ENCODE measurements at regions of chr2 and their contacts with region 1.

Region 1: GRCh38 chr2:65471409-65471808 is 39.0 kb upstream of the SPRED2 start:
- DNase-seq: no peak
- H3K4me3 ChIP-seq: no peak overlapping the region
- H3K27ac ChIP-seq: no peak overlapping the region
- H3K4me1 ChIP-seq: no peaks in the 10 kb centered on the region
- H3K27me3 ChIP-seq: no peaks in the 10 kb centered on the region
- CTCF ChIP-seq: no peak
- POLR2A ChIP-seq: no peak

Region 2: DNA sequence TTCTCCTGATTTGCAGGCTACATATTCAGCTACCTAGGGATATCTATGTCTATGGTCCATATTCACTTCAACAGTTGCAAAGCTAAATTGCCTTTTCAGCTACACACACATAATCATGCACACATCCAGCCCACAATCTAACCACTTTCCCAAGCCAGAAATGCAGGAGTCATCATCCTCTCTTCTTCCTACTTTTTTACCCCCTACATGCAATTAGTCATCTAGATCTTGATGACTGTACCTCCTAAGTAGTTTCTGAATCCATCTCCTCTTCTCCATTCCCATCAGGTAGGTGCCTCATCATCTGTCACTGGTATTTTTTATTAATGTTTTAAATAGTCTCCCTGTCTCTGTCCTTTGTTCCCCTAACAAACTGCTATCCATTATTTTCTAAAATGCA is 15.3 kb before region 1 on chr2:
- intact Hi-C with region 1: no loop called
- DNase-seq: no peak
- H3K4me3 ChIP-seq: no peak overlapping the region
- H3K27ac ChIP-seq: no peak overlapping the region
- H3K4me1 ChIP-seq: no peaks in the 10 kb centered on the region
- H3K27me3 ChIP-seq: no peaks in the 10 kb centered on the region
- CTCF ChIP-seq: no peak
- POLR2A ChIP-seq: no peak

Region 3: DNA sequence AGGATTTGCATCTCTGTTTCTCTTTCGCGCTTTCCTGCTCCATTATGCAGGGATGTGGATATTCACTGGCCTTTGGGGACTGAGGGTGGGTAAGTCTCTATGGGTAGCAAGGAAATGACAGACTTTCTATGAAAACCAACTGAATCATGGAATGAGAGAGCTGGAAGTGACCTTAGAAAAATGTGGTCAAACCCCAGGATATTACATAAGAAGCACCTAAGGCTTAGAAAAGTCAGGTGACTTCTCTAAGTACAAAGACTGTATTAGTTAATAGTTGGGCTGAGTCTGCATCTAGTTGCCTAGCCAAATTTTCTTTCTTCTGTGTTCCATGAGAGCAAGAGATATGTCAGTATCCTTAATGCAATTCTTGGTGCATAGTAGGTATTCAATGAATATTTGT is 42.1 kb after region 1 on chr2:
- intact Hi-C with region 1: loop called (anchors 1 kb)
- DNase-seq: no peak
- H3K4me3 ChIP-seq: no peak overlapping the region
- H3K27ac ChIP-seq: no peak overlapping the region
- H3K4me1 ChIP-seq: no peaks in the 10 kb centered on the region
- H3K27me3 ChIP-seq: no peaks in the 10 kb centered on the region
- CTCF ChIP-seq: no peak
- POLR2A ChIP-seq: no peak

Region 4: GRCh38 chr2:65754219-65754618 is 282.8 kb after region 1 on chr2:
- intact Hi-C with region 1: no loop called
- DNase-seq: no peak
- H3K4me3 ChIP-seq: no peak overlapping the region
- H3K27ac ChIP-seq: no peak overlapping the region
- H3K4me1 ChIP-seq: no peaks in the 10 kb centered on the region
- H3K27me3 ChIP-seq: no peaks in the 10 kb centered on the region
- CTCF ChIP-seq: no peak
- POLR2A ChIP-seq: no peak